Activated CD8-positive, alpha-beta T cell treated with anti-CD3 and anti-CD28 coated beads for 36 hours (primary cell): ENCODE measurements at regions of chr12 and their contacts with region 1.

Region 1: GRCh38 chr12:103924761-103925641 is 5.2 kb upstream of the HSP90B1 start:
- DNase-seq: peak; percentile 85
- ATAC-seq: peak; percentile 35
- H3K4me3 Mint-ChIP-seq: peak overlapping the region; percentile 86
- H3K27ac Mint-ChIP-seq: peak overlapping the region; percentile 93
- H3K4me1 Mint-ChIP-seq: peaks cover 37% of the 10 kb centered on the region
- H3K27me3 Mint-ChIP-seq: peaks cover under 1% of the 10 kb centered on the region
- CTCF ChIP-seq: no peak

Region 2: GRCh38 chr12:103901518-103902173 is 23.4 kb before region 1 on chr12:
- CTCF ChIA-PET with region 1: interaction called, 14 read pairs
- POLR2A ChIA-PET with region 1: interaction called, 90 read pairs
- intact Hi-C with region 1: loop called (anchors 2 kb)
- DNase-seq: peak; percentile 52
- ATAC-seq: peak; percentile 54
- H3K4me3 Mint-ChIP-seq: peak overlapping the region; percentile 58
- H3K27ac Mint-ChIP-seq: peak overlapping the region; percentile 82
- H3K4me1 Mint-ChIP-seq: peaks cover 65% of the 10 kb centered on the region
- H3K27me3 Mint-ChIP-seq: no peaks in the 10 kb centered on the region
- CTCF ChIP-seq: no peak

Region 3: GRCh38 chr12:104022786-104023185 is 97.8 kb after region 1 on chr12:
- CTCF ChIA-PET with region 1: no interaction called
- POLR2A ChIA-PET with region 1: no interaction called
- intact Hi-C with region 1: no loop called
- DNase-seq: no peak
- ATAC-seq: no peak
- H3K4me3 Mint-ChIP-seq: no peak overlapping the region
- H3K27ac Mint-ChIP-seq: no peak overlapping the region
- H3K4me1 Mint-ChIP-seq: no peaks in the 10 kb centered on the region
- H3K27me3 Mint-ChIP-seq: peaks cover 10% of the 10 kb centered on the region
- CTCF ChIP-seq: no peak